ENCODE measurements at regions of chr9 and their contacts with region 1.

Region 1: GRCh38 chr9:71768388-71769174 is at the start of gene CEMIP2:
- DNase-seq: peak; percentile 91
- H3K4me3 ChIP-seq: peak within 1 kb of the TSS; percentile 74
- H3K27ac ChIP-seq: peak within 1 kb of the TSS; percentile 86
- H3K4me1 ChIP-seq: peaks cover 45% of the 10 kb centered on the region
- H3K27me3 ChIP-seq: no peaks in the 10 kb centered on the region
- CTCF ChIP-seq: peak; percentile 42; the same call in 1 of the 2 replicates
- total RNA-seq, gene CEMIP2: 31.8 and 32.9 TPM in 2 replicates

Region 2: GRCh38 chr9:71683598-71684235 is 84.9 kb before region 1 on chr9:
- CTCF ChIA-PET with region 1: interaction called, 3 read pairs
- POLR2A ChIA-PET with region 1: interaction called, 4 read pairs
- intact Hi-C with region 1: loop called (anchors 1 kb)
- DNase-seq: peak; percentile 90
- H3K4me3 ChIP-seq: no peak overlapping the region
- H3K27ac ChIP-seq: no peak overlapping the region
- H3K4me1 ChIP-seq: peaks cover 31% of the 10 kb centered on the region
- H3K27me3 ChIP-seq: no peaks in the 10 kb centered on the region
- CTCF ChIP-seq: peak; percentile 74

Region 3: DNA sequence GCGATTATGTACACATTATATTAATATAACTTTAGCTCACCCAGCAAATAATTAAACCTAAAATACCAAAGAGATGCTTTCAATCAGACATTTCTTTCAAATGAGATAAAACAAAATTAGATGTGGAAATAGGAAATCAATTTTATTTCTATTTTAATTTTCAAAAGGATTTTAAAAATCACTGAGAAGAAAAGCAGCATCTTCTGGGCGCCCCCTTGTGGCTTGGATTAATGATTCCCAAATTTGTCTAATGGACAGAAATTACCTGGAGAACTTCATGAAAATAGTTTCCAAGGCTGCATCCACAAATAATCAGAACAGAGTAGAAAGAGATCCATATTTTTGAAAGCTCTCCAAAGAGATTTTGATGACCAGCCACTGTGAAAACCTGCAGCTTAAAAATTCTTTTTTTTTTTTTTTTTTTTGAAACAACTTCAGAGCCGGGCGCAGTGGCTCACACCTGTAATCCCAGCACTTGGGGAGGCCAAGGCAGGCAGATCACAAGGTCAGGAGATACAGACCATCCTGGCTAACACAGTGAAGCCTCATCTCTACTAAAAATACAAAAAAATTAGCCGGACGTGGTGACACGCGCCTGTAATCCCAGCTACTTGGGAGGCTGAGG is 50.6 kb after region 1 on chr9:
- CTCF ChIA-PET with region 1: no interaction called
- POLR2A ChIA-PET with region 1: no interaction called
- intact Hi-C with region 1: no loop called
- DNase-seq: peak; percentile 34
- H3K4me3 ChIP-seq: no peak overlapping the region
- H3K27ac ChIP-seq: no peak overlapping the region
- H3K4me1 ChIP-seq: no peaks in the 10 kb centered on the region
- H3K27me3 ChIP-seq: no peaks in the 10 kb centered on the region
- CTCF ChIP-seq: peak; percentile 83

Region 4: DNA sequence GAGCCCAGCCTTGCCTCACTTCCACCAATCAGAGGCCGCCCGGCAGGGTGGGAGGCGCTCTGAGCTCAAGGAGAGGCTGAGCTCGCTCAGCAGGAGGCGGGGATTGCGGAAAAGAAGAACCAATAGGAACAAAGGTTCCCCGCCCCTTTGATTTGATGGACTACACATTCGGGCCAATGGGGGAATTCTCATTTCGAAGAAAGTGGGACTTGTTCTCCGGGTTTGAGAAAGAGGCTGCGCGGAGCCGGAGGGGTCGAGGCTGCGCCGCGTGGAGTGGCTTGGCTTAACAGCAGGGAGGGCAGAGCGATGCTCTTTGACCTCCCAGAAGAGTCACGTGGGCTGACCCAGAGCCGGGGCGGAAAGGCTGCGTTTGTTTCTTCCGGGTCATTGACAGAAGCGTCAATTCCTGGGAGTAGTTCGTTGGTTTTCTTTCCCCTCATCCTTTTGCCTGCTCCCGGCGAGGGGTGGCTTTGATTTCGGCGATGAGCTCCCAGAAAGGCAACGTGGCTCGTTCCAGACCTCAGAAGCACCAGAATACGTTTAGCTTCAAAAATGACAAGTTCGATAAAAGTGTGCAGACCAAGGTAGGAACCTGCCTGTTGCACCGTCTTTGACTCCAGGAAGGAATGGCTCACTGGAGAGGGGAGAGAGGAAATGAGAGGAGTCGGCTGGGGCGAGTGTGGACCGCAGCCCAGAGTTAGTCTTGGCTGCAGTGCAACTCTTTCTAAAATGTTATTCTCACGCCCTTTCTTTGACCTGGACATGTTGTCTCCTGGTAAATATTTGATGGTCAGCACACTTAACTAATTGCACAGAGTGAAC is 142.9 kb after region 1 on chr9 and contains the start of gene C9orf85:
- CTCF ChIA-PET with region 1: interaction called, 4 read pairs
- POLR2A ChIA-PET with region 1: interaction called, 3 read pairs
- intact Hi-C with region 1: loop called (anchors 5 kb)
- DNase-seq: peak; percentile 99
- H3K4me3 ChIP-seq: peak within 1 kb of the TSS; percentile 79
- H3K27ac ChIP-seq: peak within 1 kb of the TSS; percentile 81
- H3K4me1 ChIP-seq: peaks cover 10% of the 10 kb centered on the region
- H3K27me3 ChIP-seq: no peaks in the 10 kb centered on the region
- CTCF ChIP-seq: no peak
- total RNA-seq, gene C9orf85: 9.4 and 9.8 TPM in 2 replicates